GM10248 (cell line): ENCODE measurements at regions of chr6 and their contacts with region 1.

Region 1: GRCh38 chr6:104466306-104466705 is 393.4 kb downstream of the HACE1 start:
- DNase-seq: no peak
- CTCF ChIP-seq: no peak

Region 2: GRCh38 chr6:104483225-104483834 is 17.0 kb after region 1 on chr6:
- CTCF ChIA-PET with region 1: interaction called, 11 read pairs
- POLR2A ChIA-PET with region 1: no interaction called
- DNase-seq: no peak
- CTCF ChIP-seq: peak; percentile 32